K562 (cell line): ENCODE measurements at regions of chr2 and their contacts with region 1.

Region 1: DNA sequence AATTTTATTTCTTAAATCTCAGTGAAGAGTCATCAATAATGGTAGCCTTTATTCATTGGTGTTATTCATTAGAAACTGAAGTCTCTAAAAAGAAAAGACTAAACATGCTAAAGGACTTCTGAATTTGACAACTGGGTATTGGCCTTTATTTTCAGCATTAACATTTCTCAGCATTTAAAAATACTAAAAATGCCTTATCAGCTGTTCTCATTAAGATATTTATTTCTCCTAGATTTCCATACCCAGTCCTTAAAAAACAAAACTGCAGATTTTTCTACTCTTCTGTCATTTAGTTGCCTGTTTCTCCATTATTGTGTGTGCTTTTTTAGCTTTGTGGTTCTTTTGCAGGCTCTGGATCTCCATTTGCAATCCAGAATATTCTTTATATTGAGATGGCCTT is 31.2 kb upstream of the METAP1D start:
- DNase-seq: no peak
- ATAC-seq: no peak
- H3K4me3 ChIP-seq: no peak overlapping the region
- H3K27ac ChIP-seq: no peak overlapping the region
- H3K4me1 ChIP-seq: no peaks in the 10 kb centered on the region
- H3K27me3 ChIP-seq: no peaks in the 10 kb centered on the region
- CTCF ChIP-seq: no peak
- EP300 ChIP-seq: no peak
- POLR2A ChIP-seq: no peak
- RAD21 ChIP-seq: no peak

Region 2: DNA sequence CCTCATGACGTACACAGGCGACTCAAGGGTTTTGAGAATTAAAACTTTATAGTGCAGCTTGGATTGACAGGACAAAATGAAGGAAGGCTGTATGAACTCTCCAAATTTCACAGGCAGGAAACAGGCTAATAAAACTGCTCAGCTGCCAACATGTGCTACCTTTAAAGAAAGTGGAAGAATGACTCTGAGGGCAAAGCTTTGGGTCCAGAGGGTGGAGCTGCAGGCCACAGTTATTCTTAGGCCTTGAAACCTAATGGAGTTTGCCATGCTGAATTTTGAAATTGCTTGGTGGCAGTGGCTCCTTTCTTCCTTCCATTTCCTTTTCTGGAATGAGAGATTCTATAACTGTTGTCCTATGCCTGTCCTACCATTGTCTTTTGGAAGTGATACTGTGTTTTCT is 11.4 kb before region 1 on chr2:
- CTCF ChIA-PET with region 1: no interaction called
- POLR2A ChIA-PET with region 1: interaction called, 10 read pairs
- in situ Hi-C with region 1: no loop called
- intact Hi-C with region 1: no loop called
- DNase-seq: peak in 1 of 4 experiments; percentile 22
- ATAC-seq: peak; percentile 59
- H3K4me3 ChIP-seq: no peak overlapping the region
- H3K27ac ChIP-seq: peak overlapping the region; percentile 3; the same call in 1 of the 3 replicates
- H3K4me1 ChIP-seq: no peaks in the 10 kb centered on the region; a peak in 1 of 5 replicates
- H3K27me3 ChIP-seq: no peaks in the 10 kb centered on the region
- CTCF ChIP-seq: peak; percentile 18 to 50 (median 28); a peak in 3 of 6 replicates
- EP300 ChIP-seq: no peak
- POLR2A ChIP-seq: no peak
- RAD21 ChIP-seq: peak; percentile 60 to 74